Spleen (tissue), 13 donors: ENCODE measurements at regions of chr20 and their contacts with region 1.

Region 1: GRCh38 chr20:5797843-5798462 is 47.8 kb downstream of the SHLD1 start:
- DNase-seq: peak; percentile 83
- H3K4me3 ChIP-seq: no peak overlapping the region
- H3K27ac ChIP-seq: peak overlapping the region; percentile 55 to 88 (median 75)
- H3K4me1 ChIP-seq: peaks cover 0 to 23% (median 12%) of the 10 kb centered on the region in 6 donors
- H3K27me3 ChIP-seq: no peaks in the 10 kb centered on the region
- CTCF ChIP-seq: no peak
- POLR2A ChIP-seq: no peak

Region 2: GRCh38 chr20:5895626-5896025 is 97.7 kb after region 1 on chr20:
- intact Hi-C with region 1: no loop called
- DNase-seq: no peak
- H3K4me3 ChIP-seq: no peak overlapping the region
- H3K27ac ChIP-seq: no peak overlapping the region
- H3K4me1 ChIP-seq: no peaks in the 10 kb centered on the region
- H3K27me3 ChIP-seq: peaks cover 0 to 22% (median 0%) of the 10 kb centered on the region in 7 donors
- CTCF ChIP-seq: no peak
- POLR2A ChIP-seq: no peak

Region 3: DNA sequence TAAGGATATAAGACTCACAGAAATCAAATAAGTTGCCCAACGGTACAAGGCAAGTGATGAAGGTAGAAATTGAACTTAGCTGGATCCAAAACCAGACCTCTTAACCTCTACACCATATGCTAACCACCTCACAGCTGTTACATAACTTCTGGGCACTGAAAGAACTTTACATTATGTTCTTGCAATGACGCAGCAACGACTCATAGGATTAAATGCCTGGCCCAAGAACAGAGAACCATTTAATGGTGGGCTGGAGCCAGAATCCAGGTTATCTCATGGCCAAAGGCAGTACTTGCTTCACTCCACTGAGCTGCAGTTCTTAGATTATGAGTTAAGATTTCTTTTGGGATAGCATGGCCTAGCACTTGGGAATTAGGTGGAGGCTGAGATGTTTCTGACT is 148.0 kb after region 1 on chr20:
- intact Hi-C with region 1: loop called (anchors 10 kb)
- DNase-seq: no peak
- H3K4me3 ChIP-seq: no peak overlapping the region
- H3K27ac ChIP-seq: no peak overlapping the region
- H3K4me1 ChIP-seq: peaks cover 7 to 49% (median 35%) of the 10 kb centered on the region in 6 donors
- H3K27me3 ChIP-seq: no peaks in the 10 kb centered on the region
- CTCF ChIP-seq: no peak
- POLR2A ChIP-seq: no peak